Right ventricle myocardium inferior (tissue), 1 donor: ENCODE measurements at regions of chr11 and their contacts with region 1.

Region 1: DNA sequence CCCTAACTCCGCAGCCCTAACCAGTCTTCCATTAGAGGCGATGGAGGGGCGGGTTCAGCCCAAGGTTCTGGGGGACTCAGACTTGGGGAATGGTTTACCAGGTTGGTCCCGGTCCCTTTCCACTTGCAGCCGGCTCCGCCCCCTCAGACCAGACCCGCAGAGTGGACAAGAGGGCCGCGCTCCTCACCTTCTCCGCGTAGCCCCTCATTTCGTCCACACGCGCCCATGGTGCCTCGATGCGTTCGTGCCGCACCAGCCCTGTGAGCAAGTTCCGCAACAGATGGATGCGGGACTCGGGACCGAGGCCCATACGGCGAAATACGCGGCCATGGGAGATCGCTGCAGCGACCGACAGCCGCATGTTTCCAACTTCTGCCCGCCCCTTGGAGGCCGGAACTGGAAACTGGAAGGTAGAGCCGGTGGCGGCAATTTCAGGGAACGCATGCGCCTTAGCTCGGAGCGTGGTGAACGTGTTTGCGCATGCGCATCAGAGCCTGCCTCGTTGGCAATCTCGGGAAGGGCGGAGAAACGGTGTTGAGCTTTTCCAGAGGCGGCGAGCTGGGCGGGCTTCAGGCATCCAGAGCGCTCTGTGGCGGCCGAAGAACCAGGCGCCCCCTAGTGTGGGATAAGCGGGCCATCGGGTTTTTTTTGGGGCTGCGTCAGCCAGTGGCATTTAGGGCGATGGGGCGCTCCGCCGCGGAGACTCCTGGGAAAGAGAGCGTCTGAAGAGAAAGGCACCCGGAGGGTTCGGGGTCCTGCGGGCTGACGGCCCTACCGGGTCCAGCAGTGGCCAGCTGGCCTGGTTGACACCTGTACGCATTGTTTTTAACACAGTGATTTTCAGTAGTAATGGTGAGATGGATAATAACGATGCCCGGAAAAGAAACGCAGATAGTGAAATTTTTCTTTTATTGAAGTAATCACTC is at the start of gene MRPL17:
- DNase-seq: peak; percentile 99
- ATAC-seq: peak; percentile 98
- total RNA-seq, gene MRPL17: 44.8 TPM

Region 2: DNA sequence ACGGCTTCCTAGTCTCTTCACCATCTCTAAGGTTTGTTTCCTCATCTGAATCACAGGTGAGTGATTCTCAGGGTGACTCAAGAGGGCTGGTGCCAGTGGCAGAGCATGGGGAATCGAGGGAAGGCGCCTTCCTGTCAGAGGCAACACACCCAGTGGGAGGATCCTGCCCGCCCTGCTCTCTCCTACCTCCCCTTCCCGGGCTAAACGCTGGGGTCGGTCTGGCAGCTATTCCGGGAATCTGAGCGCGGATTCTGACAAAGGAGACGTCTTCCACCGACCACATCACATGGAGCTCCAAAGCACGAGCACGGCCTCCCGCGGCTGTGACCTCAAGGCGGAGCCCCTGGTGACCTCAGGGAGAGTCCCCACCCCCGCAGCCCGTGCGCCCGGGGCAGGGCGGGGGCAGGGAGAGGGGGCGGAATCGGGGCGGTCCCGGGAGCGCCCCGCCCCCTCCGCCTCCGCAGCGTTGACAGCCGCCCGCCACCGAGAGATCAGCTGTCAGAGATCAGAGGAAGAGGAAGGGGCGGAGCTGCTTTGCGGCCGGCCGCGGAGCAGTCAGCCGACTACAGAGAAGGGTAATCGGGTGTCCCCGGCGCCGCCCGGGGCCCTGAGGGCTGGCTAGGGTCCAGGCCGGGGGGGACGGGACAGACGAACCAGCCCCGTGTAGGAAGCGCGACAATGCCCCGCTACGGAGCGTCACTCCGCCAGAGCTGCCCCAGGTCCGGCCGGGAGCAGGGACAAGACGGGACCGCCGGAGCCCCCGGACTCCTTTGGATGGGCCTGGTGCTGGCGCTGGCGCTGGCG is 293.1 kb before region 1 on chr11 and contains the start of gene SMPD1:
- intact Hi-C with region 1: loop called (anchors 10 kb)
- DNase-seq: peak; percentile 98
- ATAC-seq: peak; percentile 99
- total RNA-seq, gene SMPD1: 60.6 TPM

Region 3: DNA sequence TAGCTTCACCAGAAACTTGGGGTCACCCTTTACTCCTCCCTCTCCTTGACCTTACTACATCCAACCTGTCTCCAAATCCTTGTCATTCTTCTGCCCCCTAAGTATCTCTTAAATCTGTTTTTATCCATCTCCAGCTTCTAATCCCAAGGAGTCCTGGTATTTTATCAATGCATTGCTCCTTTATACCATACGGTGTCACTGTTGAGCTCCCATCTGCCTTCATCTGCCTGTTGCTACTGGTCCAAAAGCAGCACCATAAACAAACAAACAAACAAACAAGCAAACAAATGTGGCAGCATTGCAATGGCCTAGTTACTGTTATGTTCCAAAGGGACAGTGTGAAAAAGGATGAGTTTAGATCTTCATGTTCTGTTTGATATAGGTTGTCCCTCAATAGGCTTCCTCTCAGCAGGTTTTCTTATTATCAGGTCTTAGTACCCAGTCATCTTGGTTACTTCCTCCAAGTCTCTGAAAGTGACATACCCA is 151.9 kb before region 1 on chr11:
- intact Hi-C with region 1: loop called (anchors 1 kb)
- DNase-seq: no peak
- ATAC-seq: peak; percentile 48

Region 4: GRCh38 chr11:6603287-6604080 is 79.7 kb before region 1 on chr11 and contains the starts of genes ILK and RRP8:
- intact Hi-C with region 1: loop called (anchors 2 kb)
- DNase-seq: peak; percentile 96
- ATAC-seq: peak; percentile 90
- total RNA-seq, gene ILK: 233 TPM
- total RNA-seq, gene RRP8: 22.9 TPM

Region 5: DNA sequence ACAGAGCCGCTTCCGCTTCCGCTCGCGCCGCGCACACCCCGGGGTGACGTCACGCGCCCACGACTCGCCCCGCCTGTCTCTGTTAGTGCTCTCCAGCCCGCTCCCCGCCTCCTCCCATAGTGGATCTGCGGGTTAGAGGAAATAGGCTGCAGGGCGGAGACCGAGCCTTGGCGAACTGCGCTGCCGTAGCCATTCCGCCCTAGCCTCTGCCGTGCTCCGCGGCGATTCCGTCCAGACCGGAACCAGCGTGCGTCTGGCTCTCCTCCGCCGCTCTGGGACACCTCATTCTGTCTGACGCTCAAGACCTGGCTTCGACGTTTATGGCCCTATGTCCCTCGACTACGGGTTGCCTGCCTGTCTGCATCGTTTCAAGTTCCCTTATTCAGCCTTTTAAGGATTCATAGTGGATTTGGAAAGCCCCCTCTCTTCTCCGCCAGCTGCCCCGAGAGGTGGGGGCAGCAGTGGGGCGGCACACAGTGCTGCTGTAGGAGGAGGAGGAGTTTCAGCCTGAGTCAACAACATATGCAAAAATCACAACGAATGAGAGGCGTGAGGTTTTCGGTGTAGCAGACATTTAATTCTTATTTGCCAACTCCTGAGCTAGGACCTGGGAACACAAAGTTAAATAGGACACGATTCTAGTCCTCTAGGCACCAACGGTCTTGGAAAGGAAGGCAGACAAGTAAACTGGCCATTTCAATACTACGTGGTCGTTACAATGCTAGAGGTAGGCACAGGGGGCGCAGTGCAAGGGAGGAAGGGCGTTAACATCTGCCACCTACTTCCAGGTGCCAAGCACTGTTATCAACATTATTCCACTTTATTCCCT is 70.8 kb before region 1 on chr11 and contains the start of gene TAF10:
- intact Hi-C with region 1: loop called (anchors 2 kb)
- DNase-seq: peak; percentile 100
- ATAC-seq: peak; percentile 96
- total RNA-seq, gene TAF10: 90.9 TPM

Region 6: GRCh38 chr11:6646918-6647679 is 36.1 kb before region 1 on chr11:
- intact Hi-C with region 1: loop called (anchors 5 kb)
- DNase-seq: peak; percentile 72
- ATAC-seq: peak; percentile 30

Region 7: GRCh38 chr11:6693342-6694228 is 10.4 kb after region 1 on chr11:
- intact Hi-C with region 1: no loop called
- DNase-seq: no peak
- ATAC-seq: peak; percentile 73

Region 8: GRCh38 chr11:6799402-6799801 is 116.2 kb after region 1 on chr11 and contains the start of gene OR6A2:
- intact Hi-C with region 1: no loop called
- DNase-seq: no peak
- ATAC-seq: no peak
- total RNA-seq, gene OR6A2: not detected